ENCODE measurements at regions of chr15 and their contacts with region 1.

Region 1: DNA sequence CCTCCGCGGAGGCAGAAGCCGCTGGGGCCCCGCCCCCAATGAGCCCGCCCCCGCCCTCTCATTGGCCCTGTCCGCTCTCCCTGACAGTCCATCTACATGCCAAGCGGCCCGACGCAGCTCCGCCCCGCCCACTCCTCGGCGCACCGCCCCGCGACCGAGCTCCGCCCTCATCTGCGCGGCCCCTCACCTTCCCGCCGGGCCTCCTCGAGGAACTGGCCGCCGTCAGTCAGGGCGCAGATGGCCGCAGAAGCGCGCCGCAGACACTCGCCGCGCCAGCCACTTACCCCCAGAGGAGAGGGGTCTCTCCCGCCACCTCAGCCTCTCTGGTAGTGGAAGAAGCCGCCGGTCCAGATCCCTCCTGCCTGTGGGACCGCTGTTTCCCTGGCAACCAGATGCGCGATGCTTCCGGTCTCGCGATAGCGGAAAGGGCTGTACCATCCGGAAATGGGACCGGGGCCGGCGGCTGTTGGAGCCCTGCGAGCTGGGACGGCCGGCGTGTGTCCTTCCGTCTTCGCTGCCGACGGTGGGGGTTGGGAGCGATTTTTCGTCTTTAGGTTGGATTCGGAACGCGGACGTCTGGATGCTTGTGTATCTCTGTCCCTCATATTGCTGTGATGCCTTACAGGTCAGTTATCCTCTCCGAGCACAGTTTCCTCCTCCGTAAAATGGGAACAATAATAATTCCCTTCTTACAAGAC is at the start of gene FSIP1:
- DNase-seq: peak; percentile 98
- ATAC-seq: peak; percentile 99
- H3K4me3 ChIP-seq: peak within 1 kb of the TSS; percentile 81 to 98 (median 91)
- H3K4me3 Mint-ChIP-seq: peak within 1 kb of the TSS; percentile 85
- H3K27ac ChIP-seq: peak within 1 kb of the TSS; percentile 63 to 83
- H3K27ac Mint-ChIP-seq: peak within 1 kb of the TSS; percentile 97
- H3K4me1 ChIP-seq: peaks cover 17 to 18% of the 10 kb centered on the region in 2 donors
- H3K4me1 Mint-ChIP-seq: peaks cover 43% of the 10 kb centered on the region
- H3K27me3 ChIP-seq: peaks cover 0 to 5% (median under 1%) of the 10 kb centered on the region in 4 experiments
- H3K27me3 Mint-ChIP-seq: peaks cover 5% of the 10 kb centered on the region
- CTCF ChIP-seq: no peak
- total RNA-seq, gene FSIP1: 0.44 and 0.49 TPM in 2 replicates

Region 2: DNA sequence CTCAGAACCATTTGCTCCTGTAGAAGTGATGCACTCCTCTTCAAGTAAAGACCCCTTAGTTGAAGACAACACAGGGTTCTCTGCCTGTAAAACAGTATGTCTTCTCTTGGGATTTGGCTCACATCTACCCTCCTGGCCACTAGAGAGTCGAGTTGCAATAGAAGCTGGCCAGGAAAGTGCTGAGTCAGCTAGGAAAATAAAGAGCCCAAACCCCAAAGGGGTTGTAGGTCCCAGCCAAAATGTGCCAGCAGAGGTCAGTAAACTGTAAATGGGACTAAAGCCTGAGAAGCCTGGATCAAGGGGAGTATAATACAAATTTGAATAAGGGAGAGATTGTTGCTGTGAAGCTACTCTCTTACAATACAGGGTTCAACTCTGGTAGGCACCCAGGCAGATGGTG is 238.9 kb before region 1 on chr15:
- CTCF ChIA-PET with region 1: no interaction called
- POLR2A ChIA-PET with region 1: no interaction called
- intact Hi-C with region 1: no loop called
- DNase-seq: no peak
- ATAC-seq: no peak
- H3K4me3 ChIP-seq: no peak overlapping the region
- H3K4me3 Mint-ChIP-seq: no peak overlapping the region
- H3K27ac ChIP-seq: no peak overlapping the region
- H3K27ac Mint-ChIP-seq: no peak overlapping the region
- H3K4me1 ChIP-seq: no peaks in the 10 kb centered on the region
- H3K4me1 Mint-ChIP-seq: no peaks in the 10 kb centered on the region
- H3K27me3 ChIP-seq: no peaks in the 10 kb centered on the region
- H3K27me3 Mint-ChIP-seq: no peaks in the 10 kb centered on the region
- CTCF ChIP-seq: no peak

Region 3: DNA sequence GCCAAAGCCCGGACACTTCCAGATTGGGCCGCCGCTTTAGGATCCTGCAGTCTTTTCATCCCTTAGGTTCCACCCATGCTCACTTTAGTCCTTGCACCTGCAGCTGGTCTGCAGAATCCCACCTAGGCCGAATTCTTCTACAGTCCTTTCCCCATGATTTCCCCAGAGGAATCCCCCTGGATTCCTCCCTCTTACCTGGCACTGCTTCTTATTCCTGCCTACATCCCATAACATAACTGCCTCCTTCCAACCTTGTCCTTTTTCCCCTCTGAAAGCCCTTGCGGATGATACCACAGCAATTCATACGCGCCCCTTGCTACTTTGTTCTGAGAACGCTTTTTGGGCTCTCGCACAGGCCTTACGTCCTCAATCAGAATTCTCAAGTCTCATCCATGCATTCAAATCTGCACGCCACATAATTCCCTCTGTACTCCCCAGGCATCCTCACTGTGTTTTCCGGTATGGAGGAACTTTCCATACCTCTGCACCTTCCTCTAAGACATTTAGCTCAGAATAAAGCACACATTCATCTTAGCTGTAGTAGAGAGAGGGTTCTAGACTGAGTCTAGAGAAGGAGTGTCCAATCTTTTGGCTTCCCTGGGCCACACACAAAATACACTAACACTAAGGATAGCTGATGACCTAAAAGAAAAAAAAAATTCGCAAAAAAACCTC is 151.9 kb after region 1 on chr15:
- CTCF ChIA-PET with region 1: no interaction called
- POLR2A ChIA-PET with region 1: no interaction called
- intact Hi-C with region 1: loop called (anchors 2 kb)
- DNase-seq: no peak
- ATAC-seq: no peak
- H3K4me3 ChIP-seq: peak overlapping the region; percentile 45 to 80 (median 68)
- H3K4me3 Mint-ChIP-seq: peak overlapping the region; percentile 91
- H3K27ac ChIP-seq: peak overlapping the region in 1 of 2 donors; percentile 71
- H3K27ac Mint-ChIP-seq: peak overlapping the region; percentile 39
- H3K4me1 ChIP-seq: peaks cover 13 to 23% of the 10 kb centered on the region in 2 donors
- H3K4me1 Mint-ChIP-seq: peaks cover 38% of the 10 kb centered on the region
- H3K27me3 ChIP-seq: peaks cover 0 to 12% (median 3%) of the 10 kb centered on the region in 4 experiments
- H3K27me3 Mint-ChIP-seq: peaks cover 16% of the 10 kb centered on the region
- CTCF ChIP-seq: no peak

Region 4: GRCh38 chr15:40160689-40161688 is 378.4 kb after region 1 on chr15 and contains the start of gene BUB1B:
- CTCF ChIA-PET with region 1: no interaction called
- POLR2A ChIA-PET with region 1: no interaction called
- intact Hi-C with region 1: loop called (anchors 5 kb)
- DNase-seq: peak; percentile 96
- ATAC-seq: peak; percentile 97
- H3K4me3 ChIP-seq: peak within 1 kb of the TSS; percentile 56 to 77 (median 71)
- H3K4me3 Mint-ChIP-seq: no peak within 1 kb of the TSS
- H3K27ac ChIP-seq: no peak within 1 kb of the TSS
- H3K27ac Mint-ChIP-seq: no peak within 1 kb of the TSS
- H3K4me1 ChIP-seq: peaks cover 10 to 14% of the 10 kb centered on the region in 2 donors
- H3K4me1 Mint-ChIP-seq: peaks cover 7% of the 10 kb centered on the region
- H3K27me3 ChIP-seq: no peaks in the 10 kb centered on the region
- H3K27me3 Mint-ChIP-seq: no peaks in the 10 kb centered on the region
- CTCF ChIP-seq: no peak
- total RNA-seq, gene BUB1B: 2.9 and 4.4 TPM in 2 replicates

Measured in B cell (primary cell).